ENCODE measurements at regions of chr12 and their contacts with region 1.

Region 1: DNA sequence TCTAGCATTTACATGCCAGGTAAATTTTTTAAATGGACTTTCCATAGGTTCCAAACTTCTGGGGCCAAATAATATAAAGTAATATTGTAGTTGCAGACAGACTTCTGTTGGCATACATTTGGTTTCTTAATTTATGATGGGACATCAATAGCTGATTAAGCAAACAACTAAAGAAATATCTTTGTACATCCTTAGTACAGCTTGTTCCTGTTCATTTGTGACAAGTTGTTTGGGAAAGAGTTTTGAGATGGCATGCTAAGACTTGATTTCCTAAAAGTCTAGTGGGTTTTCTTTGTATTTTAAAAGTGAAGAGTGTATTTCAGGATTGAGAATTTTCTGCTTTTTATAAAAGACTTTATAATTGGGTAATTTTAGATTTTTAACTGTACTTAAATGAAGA is 41.0 kb downstream of the CCDC91 start:
- DNase-seq: no peak

Region 2: DNA sequence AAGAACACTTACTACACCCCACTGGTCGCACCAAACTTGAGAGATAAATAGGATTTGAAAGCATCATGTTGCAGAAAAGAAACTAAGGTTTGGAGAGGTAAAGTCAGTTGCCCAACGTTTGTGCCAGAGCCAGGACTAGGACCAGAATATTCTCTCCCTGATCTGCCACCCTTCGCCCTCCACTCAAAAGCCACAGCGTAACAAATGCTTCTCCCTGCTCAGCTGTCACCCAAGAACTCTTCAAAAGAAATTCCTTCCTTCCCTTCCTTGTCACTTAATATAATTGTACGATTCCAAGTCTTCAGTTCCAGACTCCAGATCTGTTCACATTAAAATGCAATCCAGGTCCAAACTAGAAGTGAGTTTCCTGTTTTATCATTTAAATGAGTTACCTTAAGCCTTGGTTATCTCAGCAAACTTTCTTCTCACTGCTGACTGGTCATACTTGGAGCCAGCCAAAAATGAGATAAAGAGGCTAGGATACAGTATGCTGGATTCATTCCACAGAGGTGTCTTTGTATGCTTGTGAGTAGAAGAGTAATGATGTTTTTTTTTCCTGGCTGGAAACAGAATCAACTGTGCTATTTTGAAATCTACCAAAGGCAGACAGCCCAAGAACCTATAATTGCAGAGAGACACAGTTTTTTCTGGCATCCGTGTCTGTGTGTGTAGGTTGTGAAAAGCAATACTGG is 720.1 kb before region 1 on chr12:
- intact Hi-C with region 1: no loop called
- DNase-seq: no peak

Region 3: DNA sequence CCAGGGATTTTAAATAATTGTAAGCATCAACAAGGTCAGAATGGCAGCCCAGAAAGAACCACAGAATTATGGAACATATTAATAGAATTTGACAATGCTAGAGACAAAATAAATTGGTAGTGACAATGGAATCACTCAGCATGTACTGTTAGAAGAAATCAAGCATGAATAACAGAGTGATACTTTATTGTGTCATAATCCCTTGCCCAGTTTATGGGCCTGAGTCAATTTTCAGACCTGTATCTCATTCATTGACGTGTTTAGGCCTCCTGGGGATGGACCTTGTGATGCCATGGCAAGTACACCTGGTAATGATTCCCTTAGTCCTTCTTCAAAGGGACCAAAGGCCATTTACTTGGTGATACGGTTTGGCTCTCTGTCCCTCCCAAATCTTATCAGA is 53.8 kb before region 1 on chr12:
- intact Hi-C with region 1: no loop called
- DNase-seq: no peak

Region 4: DNA sequence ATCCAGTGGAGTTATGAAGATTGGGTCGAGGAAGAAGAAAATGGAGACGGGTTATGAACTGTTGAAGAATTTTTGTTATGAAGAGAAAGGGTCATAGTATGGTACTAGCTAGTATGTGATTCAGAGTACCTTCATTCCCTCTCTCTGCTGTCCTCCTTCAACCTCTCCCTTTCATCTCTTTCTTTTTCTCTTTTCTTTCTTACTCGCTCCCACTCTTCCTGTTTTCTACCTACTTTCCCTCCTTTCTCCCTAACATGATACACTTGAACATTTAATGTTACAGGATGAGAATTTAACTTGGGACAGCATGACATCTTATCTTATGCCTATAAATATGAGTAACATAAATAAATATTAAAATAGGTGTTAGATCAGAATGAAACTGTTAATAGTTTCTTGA is 71.9 kb after region 1 on chr12:
- intact Hi-C with region 1: loop called (anchors 2 kb)
- DNase-seq: no peak

Region 5: DNA sequence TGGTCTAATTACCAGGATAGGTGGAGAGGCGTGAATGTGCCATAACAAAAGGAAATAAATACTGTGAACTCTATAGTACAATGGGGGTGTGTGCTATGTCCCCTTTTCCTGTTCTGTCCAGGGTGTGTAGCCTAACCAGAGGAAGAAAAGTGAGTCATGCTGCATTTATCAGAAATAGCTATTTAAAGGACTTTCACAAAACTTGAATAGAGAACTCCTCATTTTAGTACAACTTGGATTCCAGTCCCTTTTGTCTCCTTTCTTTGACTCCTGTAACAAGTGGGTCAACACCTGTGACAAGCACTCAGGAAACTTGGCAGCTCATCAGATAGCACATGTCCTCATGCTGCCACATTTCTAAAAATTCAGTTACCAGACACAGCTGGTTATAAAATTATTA is 82.4 kb after region 1 on chr12:
- intact Hi-C with region 1: no loop called
- DNase-seq: no peak

Region 6: DNA sequence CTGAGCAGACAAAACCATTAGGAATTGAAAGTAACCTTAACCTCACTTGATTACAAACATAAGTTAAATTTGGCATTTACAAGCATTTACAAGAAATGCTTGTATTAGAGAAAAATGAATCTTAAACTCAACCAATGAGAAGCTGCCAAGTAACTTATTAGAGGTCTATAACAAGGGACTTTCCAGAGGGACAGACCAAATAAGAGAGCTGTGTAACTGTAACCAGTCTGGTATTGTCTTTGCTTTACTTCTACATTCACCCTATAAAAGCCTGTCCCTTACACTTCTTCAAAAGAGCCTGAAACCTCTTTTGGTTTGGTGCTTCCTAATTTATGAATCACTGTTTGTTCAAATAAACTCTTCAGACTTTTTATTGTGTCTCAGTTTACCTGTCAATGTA is 467.8 kb after region 1 on chr12:
- intact Hi-C with region 1: no loop called
- DNase-seq: no peak